Thyroid gland (tissue), 4 donors: ENCODE measurements at regions of chr19 and their contacts with region 1.

Region 1: GRCh38 chr19:18322759-18323460 is at the start of gene LSM4:
- DNase-seq: peak; percentile 99 to 100
- H3K4me3 ChIP-seq: peak within 1 kb of the TSS; percentile 27 to 77 (median 62)
- H3K27ac ChIP-seq: peak within 1 kb of the TSS; percentile 87 to 92 (median 92)
- H3K4me1 ChIP-seq: peaks cover 21 to 48% of the 10 kb centered on the region in 2 donors
- H3K27me3 ChIP-seq: no peaks in the 10 kb centered on the region
- CTCF ChIP-seq: peak in 3 of 6 experiments; percentile 12 to 39 (median 34)
- POLR2A ChIP-seq: peak; percentile 31 to 90
- total RNA-seq, gene LSM4: 55.2 to 203 (median 140) TPM

Region 2: DNA sequence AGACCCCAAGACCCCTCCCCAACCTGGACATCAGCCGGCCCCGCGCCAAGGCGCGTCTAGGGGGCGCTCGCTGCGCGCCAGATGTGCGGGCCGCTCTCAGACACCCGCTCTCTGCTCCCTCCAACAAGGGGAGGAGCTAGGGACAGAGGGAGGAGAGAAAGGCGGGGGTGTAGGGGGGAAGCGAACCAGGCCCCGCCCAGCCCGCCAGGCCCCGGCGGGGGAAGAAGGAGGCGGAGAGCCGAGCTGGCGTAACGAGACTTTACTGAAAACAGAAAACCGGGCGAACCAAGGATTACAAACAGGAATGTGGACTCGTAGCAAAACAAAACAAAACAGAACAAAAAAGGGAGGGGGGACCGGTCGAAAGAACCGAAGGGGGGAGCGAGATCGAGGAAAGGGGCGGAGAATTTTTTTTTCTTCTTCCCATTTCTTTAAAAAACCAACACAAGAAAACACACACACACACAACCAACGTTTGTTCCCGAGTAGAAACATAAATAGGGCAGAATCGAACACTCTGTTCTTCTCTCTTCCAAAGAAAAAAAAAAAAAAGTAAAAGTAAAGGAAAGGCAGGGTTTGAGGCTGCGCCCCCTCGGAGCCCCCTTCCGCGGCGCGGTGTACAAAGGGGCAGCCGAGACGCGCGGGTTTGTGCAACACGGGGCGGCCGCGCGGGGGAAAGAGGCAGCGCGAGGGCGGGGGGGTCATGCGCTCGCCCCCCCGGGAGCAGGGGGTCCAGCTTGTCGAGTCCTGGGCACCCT is 43.2 kb before region 1 on chr19:
- intact Hi-C with region 1: loop called (anchors 2 kb)
- DNase-seq: peak; percentile 94
- H3K4me3 ChIP-seq: peak overlapping the region; percentile 97 to 99 (median 99)
- H3K27ac ChIP-seq: peak overlapping the region; percentile 100
- H3K4me1 ChIP-seq: peaks cover 33 to 47% of the 10 kb centered on the region in 2 donors
- H3K27me3 ChIP-seq: no peaks in the 10 kb centered on the region
- CTCF ChIP-seq: peak; percentile 44 to 95 (median 84)
- POLR2A ChIP-seq: peak in 1 of 2 donors; percentile 93